ENCODE measurements at regions of chr14 and their contacts with region 1.

Region 1: GRCh38 chr14:64880221-64881121 is 764 bp upstream of the SPTB start:
- DNase-seq: peak; percentile 43 to 67 (median 58)
- ATAC-seq: peak; percentile 56 to 72 (median 68)
- H3K4me3 ChIP-seq: peak overlapping the region; percentile 56 to 78 (median 66)
- H3K27ac ChIP-seq: peak overlapping the region; percentile 32 to 95 (median 89)
- H3K4me1 ChIP-seq: peaks cover 0 to 32% (median 11%) of the 10 kb centered on the region in 12 donors
- H3K27me3 ChIP-seq: peaks cover 0 to 56% (median 14%) of the 10 kb centered on the region in 9 donors
- CTCF ChIP-seq: no peak
- POLR2A ChIP-seq: no peak

Region 2: DNA sequence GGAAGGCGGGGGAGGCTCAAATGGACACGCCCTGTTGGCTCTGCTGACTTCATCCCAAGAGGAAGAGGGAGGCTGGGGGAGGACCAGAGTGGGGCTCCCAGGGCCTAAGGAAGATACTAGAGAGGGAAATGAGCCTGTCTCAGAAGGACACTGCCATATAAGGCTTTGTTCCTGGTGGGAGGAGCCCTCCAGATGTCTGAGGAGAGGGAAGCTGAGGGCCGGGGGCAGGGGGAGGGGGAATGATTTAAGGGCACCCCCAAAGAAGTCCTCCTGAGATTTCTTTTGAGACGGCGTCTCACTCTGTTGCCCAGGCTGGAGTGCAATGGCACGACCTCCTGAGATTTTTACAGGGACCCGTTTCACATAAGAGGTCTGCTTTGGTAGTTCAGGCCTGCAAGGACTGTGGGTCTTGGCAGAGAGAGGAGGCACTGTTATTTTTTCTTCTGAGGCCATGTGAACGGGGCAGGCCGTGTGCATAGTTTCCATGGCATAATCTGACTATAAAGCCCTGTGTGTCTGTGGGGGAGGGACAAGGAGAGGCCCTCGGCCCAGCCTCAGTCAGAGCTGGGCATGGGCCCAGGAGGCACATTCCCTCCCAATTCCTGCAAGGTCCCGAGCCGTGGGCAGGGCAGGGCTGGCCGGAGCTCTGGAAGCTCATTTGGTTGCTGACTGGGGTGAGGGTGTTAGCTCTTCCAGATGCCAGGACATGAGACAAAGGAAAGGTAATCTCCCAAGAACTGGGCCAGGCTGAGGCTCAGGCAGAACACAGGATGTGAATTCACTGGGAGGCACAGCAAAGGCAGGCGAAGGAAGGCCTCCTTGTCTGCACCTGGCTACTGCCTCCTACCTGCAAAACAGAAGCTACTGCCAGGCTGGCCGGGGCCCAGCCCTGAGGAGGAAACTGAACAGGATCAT is 198.4 kb before region 1 on chr14:
- intact Hi-C with region 1: loop called in 6 of 10 experiments (anchors 10 kb)
- DNase-seq: peak; percentile 70 to 82 (median 78)
- ATAC-seq: peak; percentile 81 to 96 (median 94)
- H3K4me3 ChIP-seq: no peak overlapping the region
- H3K27ac ChIP-seq: peak overlapping the region; percentile 25 to 92 (median 79)
- H3K4me1 ChIP-seq: peaks cover 0 to 47% (median 20%) of the 10 kb centered on the region in 12 donors
- H3K27me3 ChIP-seq: no peaks in the 10 kb centered on the region
- CTCF ChIP-seq: no peak
- POLR2A ChIP-seq: peak in 1 of 2 donors; percentile 25

Region 3: DNA sequence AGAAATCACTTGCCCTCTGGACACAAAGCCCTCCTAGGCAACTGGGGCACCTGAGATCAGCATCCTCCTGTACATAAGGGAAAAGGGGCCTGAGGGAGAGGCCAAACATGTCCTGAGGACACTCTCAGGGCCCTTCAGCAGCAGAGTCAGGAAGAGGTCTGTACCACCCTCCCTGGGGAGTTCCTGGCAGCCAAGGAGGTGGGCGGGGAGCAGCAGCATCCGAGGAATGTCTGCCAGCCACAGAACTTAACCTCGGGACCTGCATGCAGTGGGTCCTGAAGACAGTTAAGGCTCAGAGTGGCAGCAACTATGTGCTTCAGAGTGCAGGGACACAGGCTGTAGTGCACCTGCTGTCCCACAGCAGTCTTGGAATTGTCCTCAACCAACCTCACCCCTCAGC is 62.8 kb before region 1 on chr14:
- intact Hi-C with region 1: loop called in 6 of 10 experiments (anchors 2 to 5 kb)
- DNase-seq: no peak
- ATAC-seq: no peak
- H3K4me3 ChIP-seq: no peak overlapping the region
- H3K27ac ChIP-seq: no peak overlapping the region
- H3K4me1 ChIP-seq: peaks cover 0 to 22% (median under 1%) of the 10 kb centered on the region in 12 donors
- H3K27me3 ChIP-seq: no peaks in the 10 kb centered on the region
- CTCF ChIP-seq: no peak
- POLR2A ChIP-seq: no peak

Region 4: DNA sequence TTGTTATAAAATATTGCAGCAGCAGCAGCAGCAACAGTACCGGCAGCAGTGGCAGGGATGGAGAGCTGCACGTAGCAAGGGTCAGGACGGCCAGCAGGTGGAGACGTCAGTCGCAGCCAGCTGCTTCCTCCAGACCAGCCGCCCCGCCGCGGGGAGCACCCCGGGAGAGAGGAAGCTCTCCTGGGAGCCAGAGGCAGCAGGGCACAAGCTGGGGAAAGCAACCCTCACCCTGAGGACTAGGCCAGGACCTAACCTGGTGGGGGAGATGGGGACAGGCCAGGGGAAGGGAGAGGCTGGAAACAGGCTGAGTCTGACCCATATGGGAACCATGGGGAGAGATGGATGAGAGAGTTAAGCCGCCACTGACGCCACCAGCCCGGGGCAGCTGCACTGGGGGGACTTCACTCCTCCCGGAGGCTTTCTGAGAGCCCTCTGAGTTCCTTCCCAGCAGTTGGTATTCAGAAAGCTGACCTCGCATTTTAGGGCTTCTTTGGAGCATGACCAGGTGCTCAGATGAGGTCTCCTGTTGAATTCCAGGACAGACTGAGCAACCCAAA is 57.1 kb before region 1 on chr14:
- intact Hi-C with region 1: loop called in 6 of 10 experiments (anchors 2 to 5 kb)
- DNase-seq: peak; percentile 74 to 89 (median 86)
- ATAC-seq: peak; percentile 74 to 89 (median 86)
- H3K4me3 ChIP-seq: no peak overlapping the region
- H3K27ac ChIP-seq: peak overlapping the region in 2 of 12 donors; percentile 4 to 17
- H3K4me1 ChIP-seq: peaks cover 0 to 51% (median 20%) of the 10 kb centered on the region in 12 donors
- H3K27me3 ChIP-seq: no peaks in the 10 kb centered on the region
- CTCF ChIP-seq: peak; percentile 62 to 84 (median 76)
- POLR2A ChIP-seq: no peak

Region 5: GRCh38 chr14:64841121-64841651 is 39.3 kb before region 1 on chr14:
- intact Hi-C with region 1: loop called in 7 of 10 experiments (anchors 1 to 5 kb)
- DNase-seq: peak in 3 of 5 donors; percentile 34 to 67 (median 52)
- ATAC-seq: peak; percentile 70 to 84 (median 78)
- H3K4me3 ChIP-seq: peak overlapping the region in 8 of 12 donors; percentile 4 to 41 (median 30)
- H3K27ac ChIP-seq: peak overlapping the region; percentile 70 to 95 (median 81)
- H3K4me1 ChIP-seq: peaks cover 0 to 63% (median 15%) of the 10 kb centered on the region in 12 donors
- H3K27me3 ChIP-seq: peaks cover 0 to 4% (median 0%) of the 10 kb centered on the region in 9 donors
- CTCF ChIP-seq: peak in 10 of 12 donors; percentile 18 to 47 (median 36)
- POLR2A ChIP-seq: no peak